A549 (cell line): ENCODE measurements at regions of chr16 and their contacts with region 1.

Region 1: GRCh38 chr16:19583665-19584300 is 28.3 kb downstream of the VPS35L start:
- DNase-seq: peak; percentile 30 to 68
- ATAC-seq: peak; percentile 95 to 97; a peak in 5 of 6 replicates
- H3K4me3 ChIP-seq: no peak overlapping the region
- H3K27ac ChIP-seq: no peak overlapping the region
- H3K4me1 ChIP-seq: no peaks in the 10 kb centered on the region
- CTCF ChIP-seq: peak; percentile 92
- EP300 ChIP-seq: no peak
- POLR2A ChIP-seq: no peak
- RAD21 ChIP-seq: peak; percentile 56 to 70

Region 2: DNA sequence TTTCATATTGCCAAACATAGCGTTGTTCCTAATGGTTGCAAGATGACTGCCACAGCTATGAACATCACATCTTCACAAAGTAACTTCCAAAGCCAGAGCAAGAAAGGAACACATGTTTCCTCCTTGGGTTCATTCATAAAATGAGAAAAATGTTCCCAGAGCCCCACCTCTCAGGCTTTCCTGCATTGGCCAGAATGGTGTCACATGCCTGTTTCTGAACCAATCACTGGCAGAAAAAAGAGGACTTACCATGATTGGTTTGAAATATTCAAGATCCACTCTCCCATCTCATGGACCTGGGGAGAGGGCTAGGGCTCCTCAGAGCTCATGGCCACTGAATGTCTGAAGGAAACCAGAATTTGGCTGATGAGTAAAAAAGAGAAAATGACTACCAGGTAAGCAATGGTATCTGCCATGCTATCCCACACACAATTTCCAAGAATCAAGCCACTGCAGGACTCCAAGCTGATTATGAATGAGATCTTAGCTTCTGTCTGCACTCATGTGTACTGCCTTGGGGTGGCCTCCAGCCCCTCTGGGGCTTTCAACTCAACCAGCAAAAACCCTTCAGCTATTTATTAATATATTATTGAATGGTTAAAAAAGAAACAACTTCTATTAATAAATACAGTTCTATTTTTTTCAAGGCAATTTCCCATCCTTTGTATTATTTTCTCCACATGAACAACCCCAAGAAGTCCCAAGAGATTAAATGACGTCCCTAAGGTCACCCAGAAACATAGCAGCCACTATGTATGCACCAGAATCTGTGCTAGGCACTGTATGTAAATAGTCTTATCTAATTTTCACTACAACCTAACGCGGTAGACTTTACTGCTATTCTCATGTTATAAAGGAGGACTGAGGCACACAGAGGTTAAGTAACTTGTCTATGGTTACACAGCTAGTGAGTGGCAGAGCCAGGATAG is 227.5 kb before region 1 on chr16:
- CTCF ChIA-PET with region 1: no interaction called
- POLR2A ChIA-PET with region 1: no interaction called
- DNase-seq: no peak
- ATAC-seq: no peak
- H3K4me3 ChIP-seq: no peak overlapping the region
- H3K27ac ChIP-seq: no peak overlapping the region
- H3K4me1 ChIP-seq: no peaks in the 10 kb centered on the region
- CTCF ChIP-seq: no peak
- EP300 ChIP-seq: no peak
- POLR2A ChIP-seq: no peak
- RAD21 ChIP-seq: no peak

Region 3: DNA sequence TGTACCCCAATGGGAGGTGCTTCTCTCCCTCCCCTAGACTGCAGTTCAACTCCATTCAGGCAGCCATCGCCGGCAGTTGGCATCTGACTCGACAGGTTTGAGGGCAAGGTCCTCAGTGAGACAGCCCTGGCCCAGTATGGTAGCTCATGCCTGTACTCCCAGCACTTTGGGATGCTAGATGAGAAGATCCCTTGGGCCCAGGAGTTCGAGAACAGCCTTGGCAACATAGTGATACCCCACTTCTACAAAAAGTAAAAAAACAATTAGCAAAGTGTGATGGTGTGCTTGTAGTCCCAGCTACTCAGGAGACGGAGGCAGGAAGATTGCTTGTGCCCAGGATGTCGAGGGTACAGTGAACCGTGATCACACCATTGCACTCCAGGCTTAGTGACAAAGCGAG is 16.2 kb before region 1 on chr16:
- CTCF ChIA-PET with region 1: interaction called, 25 read pairs
- POLR2A ChIA-PET with region 1: no interaction called
- DNase-seq: no peak
- ATAC-seq: no peak
- H3K4me3 ChIP-seq: no peak overlapping the region
- H3K27ac ChIP-seq: no peak overlapping the region
- H3K4me1 ChIP-seq: no peaks in the 10 kb centered on the region
- CTCF ChIP-seq: no peak
- EP300 ChIP-seq: no peak
- POLR2A ChIP-seq: no peak
- RAD21 ChIP-seq: no peak

Region 4: DNA sequence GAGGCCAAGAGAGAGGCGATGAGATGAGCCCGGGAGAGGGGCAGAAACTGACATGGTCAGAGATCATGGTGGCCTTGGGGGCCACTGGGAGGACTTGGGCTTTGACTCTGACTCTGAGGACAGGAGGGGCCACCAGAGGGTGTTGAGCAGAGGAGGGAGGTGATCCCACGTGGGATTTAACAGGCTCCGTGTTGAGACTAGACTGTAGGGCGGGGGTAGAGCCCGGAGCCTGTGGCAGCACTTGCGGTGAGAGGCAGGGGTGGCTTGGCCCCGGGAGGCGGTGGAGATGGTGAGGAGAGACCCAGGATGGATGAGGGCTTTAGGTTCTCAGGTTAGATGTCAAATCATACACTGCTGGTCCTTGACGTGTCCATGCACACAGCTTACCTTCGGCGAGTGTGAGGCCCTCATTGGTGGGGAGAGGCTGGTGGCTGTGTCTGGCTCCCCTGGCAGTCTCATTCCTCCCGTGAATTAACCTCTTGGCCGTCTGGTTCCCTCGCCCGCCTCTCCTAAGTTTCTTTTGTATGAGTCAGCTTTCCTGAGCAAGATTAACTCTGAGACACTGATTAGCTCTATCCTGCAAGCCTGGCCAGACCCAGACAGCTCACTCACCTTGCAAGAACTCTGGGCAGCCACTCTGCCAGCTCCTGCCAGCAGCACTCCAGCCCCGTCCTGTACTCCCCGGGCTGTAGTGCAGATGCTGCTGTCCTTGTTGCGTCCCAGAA is 11.4 kb after region 1 on chr16:
- CTCF ChIA-PET with region 1: interaction called, 127 read pairs
- POLR2A ChIA-PET with region 1: no interaction called
- DNase-seq: peak; percentile 76 to 88
- ATAC-seq: peak; percentile 95 to 96
- H3K4me3 ChIP-seq: no peak overlapping the region
- H3K27ac ChIP-seq: peak overlapping the region; percentile 87 to 91
- H3K4me1 ChIP-seq: peaks cover 33% of the 10 kb centered on the region
- CTCF ChIP-seq: no peak
- EP300 ChIP-seq: no peak
- POLR2A ChIP-seq: no peak
- RAD21 ChIP-seq: no peak

Region 5: DNA sequence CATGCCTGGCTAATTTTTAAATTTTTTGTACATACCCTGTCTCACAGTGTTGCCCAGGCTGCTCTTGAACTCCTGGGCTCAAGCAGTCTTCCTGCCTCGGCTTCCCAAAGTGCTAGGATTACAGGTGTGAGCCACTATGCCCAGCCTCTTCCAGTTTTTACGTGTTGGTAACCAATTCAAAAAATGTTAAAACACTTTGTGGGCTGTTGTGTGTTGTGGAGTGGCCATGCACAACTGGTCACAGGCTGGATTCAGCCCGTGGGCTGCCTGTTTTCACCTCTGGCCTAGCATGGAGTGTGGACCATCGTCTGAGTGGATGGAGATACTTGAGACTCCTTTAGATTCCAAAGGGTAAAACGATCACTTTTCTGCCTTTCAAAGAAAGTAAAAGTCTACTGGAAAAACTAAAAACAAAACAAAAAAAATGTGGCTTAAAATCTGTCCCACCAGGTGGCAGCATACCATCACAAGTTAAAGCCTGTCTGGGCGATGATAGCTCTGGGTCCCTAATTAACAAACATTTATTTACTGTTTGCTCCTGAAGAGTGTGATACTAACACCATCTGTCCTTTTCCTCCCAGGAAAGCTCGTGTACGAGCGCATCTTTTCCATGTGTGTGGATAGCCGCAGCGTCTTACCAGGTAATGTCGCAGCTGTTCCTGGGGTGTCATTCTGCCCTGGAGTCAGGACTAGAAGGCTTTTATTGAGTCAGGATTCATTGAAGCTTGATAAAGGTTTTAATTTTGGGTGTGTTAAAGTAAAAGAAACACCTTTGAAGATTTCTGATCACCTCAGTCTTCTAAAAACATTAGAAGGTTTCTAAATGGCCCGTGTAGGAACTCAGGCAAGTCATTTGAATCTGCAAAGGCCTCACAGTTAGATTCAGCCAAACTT is 17.5 kb after region 1 on chr16:
- CTCF ChIA-PET with region 1: interaction called, 127 read pairs
- POLR2A ChIA-PET with region 1: no interaction called
- DNase-seq: peak; percentile 41 to 42
- ATAC-seq: peak; percentile 56 to 58; a peak in 4 of 6 replicates
- H3K4me3 ChIP-seq: no peak overlapping the region
- H3K27ac ChIP-seq: peak overlapping the region in 1 of 2 experiments; percentile 43; a peak in 3 of 6 replicates
- H3K4me1 ChIP-seq: peaks cover 14% of the 10 kb centered on the region
- CTCF ChIP-seq: peak; percentile 88
- EP300 ChIP-seq: no peak
- POLR2A ChIP-seq: no peak
- RAD21 ChIP-seq: peak; percentile 89 to 92